ENCODE measurements at regions of chr1 and their contacts with region 1.

Region 1: DNA sequence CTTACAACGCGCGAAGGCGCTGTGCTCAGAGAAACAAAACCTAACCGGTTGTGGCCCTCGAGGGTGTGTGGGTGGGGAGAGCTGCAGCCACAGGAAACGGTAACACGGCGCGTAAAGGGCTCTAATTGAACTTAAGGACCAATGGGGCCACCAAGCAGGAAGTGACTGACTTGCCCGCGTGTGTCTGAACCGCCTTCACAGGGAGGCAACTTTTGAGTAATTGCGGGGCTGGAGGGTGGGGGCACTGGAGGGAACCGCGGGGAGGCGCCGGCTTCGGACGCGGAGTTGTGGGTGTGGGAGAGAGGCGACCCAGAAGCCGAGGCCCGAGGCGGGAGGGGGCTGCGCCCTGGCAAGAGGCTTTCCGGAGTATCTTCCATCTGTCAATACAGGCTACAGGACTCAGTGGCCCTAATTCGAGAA is 577 bp upstream of the PNRC2 start:
- DNase-seq: peak in 1 of 2 donors; percentile 94
- H3K4me3 ChIP-seq: peak overlapping the region; percentile 82 to 91
- H3K27ac ChIP-seq: peak overlapping the region; percentile 99
- H3K4me1 ChIP-seq: peaks cover 34% of the 10 kb centered on the region
- H3K27me3 ChIP-seq: no peaks in the 10 kb centered on the region
- CTCF ChIP-seq: no peak
- POLR2A ChIP-seq: peak in 1 of 2 donors; percentile 3

Region 2: DNA sequence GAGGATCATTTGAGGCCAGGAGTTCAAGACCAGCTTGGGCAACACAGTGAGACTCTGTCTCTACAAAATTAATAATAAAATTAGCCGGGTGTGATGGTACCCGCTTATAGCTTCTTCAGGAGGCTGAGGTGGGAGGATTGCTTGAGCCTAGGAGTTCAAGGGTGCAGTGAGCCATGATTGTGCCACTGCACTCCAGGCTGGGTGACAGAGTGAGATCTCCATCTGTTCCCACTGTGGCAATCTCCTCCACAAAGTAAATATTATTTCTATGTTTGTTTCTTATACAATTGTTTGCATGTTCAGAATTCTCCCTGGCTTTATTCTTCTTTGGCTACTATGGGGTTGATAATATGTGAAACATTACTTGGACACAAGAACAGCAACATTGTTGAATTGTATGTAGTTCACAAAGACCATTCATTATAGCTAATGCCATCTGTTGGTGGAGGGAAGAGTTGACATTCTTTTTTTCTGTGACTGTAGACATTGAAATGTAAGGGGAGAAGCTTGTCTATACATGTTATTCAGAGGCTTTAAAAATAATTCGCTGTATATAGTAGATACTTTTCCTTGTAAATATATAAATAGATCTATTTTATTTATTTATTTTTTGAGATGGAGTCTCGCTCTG is 68.9 kb after region 1 on chr1:
- intact Hi-C with region 1: loop called (anchors 5 kb)
- DNase-seq: no peak
- H3K4me3 ChIP-seq: no peak overlapping the region
- H3K27ac ChIP-seq: no peak overlapping the region
- H3K4me1 ChIP-seq: no peaks in the 10 kb centered on the region
- H3K27me3 ChIP-seq: no peaks in the 10 kb centered on the region
- CTCF ChIP-seq: peak in 2 of 3 experiments; percentile 32 to 50
- POLR2A ChIP-seq: no peak